WTC11 (cell line): ENCODE measurements at regions of chr1 and their contacts with region 1.

Region 1: GRCh38 chr1:53485478-53486394 is 26.5 kb downstream of the DMRTB1 start:
- DNase-seq: peak; percentile 93
- ATAC-seq: peak; percentile 87
- H3K4me3 Mint-ChIP-seq: no peak overlapping the region
- H3K27ac Mint-ChIP-seq: no peak overlapping the region
- H3K4me1 Mint-ChIP-seq: peaks cover 13% of the 10 kb centered on the region
- H3K27me3 Mint-ChIP-seq: no peaks in the 10 kb centered on the region; the same call in 1 of the 2 replicates
- CTCF ChIP-seq: peak; percentile 74

Region 2: DNA sequence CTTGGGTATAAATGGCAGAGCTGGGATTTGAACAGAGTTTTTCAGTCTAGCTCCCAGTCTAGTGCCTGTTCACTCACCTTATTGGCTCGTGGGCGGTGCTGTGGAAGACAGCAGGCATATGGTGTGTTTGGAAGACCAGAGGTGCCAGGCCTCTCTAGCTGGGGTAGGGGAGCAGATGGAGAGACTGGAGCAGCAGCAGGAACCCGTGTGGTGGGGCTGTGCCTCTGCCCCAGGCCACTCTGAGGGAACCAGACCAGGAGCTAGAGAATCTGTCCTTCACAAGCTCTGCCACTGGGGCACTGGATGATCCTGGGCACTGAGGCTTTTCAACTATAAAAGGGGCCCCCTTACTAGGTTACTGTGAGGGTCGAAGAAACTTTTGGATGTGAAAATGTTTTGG is 20.7 kb before region 1 on chr1:
- CTCF ChIA-PET with region 1: interaction called, 14 read pairs
- POLR2A ChIA-PET with region 1: no interaction called
- DNase-seq: no peak
- ATAC-seq: no peak
- H3K4me3 Mint-ChIP-seq: no peak overlapping the region
- H3K27ac Mint-ChIP-seq: no peak overlapping the region
- H3K4me1 Mint-ChIP-seq: peaks cover 14% of the 10 kb centered on the region
- H3K27me3 Mint-ChIP-seq: peaks cover 20% of the 10 kb centered on the region
- CTCF ChIP-seq: no peak

Region 3: GRCh38 chr1:53519412-53519811 is 33.7 kb after region 1 on chr1:
- CTCF ChIA-PET with region 1: interaction called, 20 read pairs
- POLR2A ChIA-PET with region 1: no interaction called
- DNase-seq: no peak
- ATAC-seq: no peak
- H3K4me3 Mint-ChIP-seq: no peak overlapping the region
- H3K27ac Mint-ChIP-seq: no peak overlapping the region
- H3K4me1 Mint-ChIP-seq: no peaks in the 10 kb centered on the region
- H3K27me3 Mint-ChIP-seq: no peaks in the 10 kb centered on the region
- CTCF ChIP-seq: no peak

Region 4: DNA sequence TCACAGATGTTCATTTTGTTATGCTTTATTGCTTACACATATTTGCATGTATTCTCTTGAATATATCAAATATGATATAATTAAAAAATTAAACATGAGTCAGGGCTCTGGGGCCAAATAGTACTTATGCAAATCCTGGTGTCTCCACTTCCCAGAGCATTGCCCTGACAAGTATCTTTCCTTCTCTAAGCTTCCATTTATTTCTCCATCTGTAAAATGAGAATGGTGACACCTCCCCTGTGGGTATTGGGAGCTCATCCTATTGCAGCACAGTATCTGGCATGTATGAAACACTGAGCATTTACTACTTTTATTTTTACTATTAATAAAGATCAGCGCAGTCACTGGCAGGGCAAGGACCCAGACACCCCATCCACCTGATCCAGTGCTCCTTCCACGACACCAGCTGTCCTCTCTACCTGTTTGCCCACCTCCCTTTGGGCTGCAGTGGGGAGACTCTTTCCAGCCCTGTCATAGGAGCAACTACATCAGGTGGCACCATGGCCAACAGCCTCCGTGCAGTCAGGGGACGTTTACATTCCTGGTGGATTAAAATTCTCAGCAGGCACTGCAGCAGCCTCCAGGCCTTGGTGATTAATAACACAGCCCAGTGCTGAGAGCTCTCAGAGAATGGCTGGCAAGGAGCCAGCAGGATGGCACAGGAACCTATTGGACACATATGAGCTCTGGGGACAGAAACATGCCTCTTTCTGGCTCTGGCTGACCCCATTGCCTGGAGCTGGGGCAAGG is 86.5 kb after region 1 on chr1:
- CTCF ChIA-PET with region 1: interaction called, 49 read pairs
- POLR2A ChIA-PET with region 1: no interaction called
- DNase-seq: peak; percentile 12
- ATAC-seq: peak; percentile 48
- H3K4me3 Mint-ChIP-seq: no peak overlapping the region
- H3K27ac Mint-ChIP-seq: no peak overlapping the region
- H3K4me1 Mint-ChIP-seq: peaks cover 18% of the 10 kb centered on the region
- H3K27me3 Mint-ChIP-seq: peaks cover under 1% of the 10 kb centered on the region
- CTCF ChIP-seq: no peak

Region 5: DNA sequence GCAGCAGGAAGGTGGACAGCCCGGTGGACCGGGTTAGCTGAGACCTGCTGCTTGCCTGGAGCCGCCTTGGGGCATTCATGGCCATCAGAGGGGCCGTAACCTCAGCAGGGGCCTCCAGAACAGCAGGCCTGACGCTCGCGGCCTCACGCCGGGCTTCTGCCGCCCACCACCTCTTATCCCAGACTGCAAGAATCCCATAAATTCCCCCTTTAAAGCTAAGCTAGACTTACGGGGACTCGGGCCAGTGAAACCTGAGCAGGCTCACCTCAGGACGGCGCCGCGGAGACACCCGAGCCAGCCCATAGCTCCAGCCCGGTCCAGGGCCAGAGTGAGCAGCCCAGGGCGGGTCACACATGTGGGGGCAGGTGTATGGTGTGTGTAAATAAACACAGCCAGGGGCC is 120.9 kb after region 1 on chr1:
- CTCF ChIA-PET with region 1: interaction called, 20 read pairs
- POLR2A ChIA-PET with region 1: no interaction called
- DNase-seq: peak; percentile 45
- ATAC-seq: peak; percentile 96
- H3K4me3 Mint-ChIP-seq: no peak overlapping the region
- H3K27ac Mint-ChIP-seq: no peak overlapping the region
- H3K4me1 Mint-ChIP-seq: peaks cover 6% of the 10 kb centered on the region; the same call in 1 of the 2 replicates
- H3K27me3 Mint-ChIP-seq: peaks cover 5% of the 10 kb centered on the region; the same call in 1 of the 2 replicates
- CTCF ChIP-seq: no peak

Region 6: GRCh38 chr1:53738205-53739108 is 252.7 kb after region 1 on chr1:
- CTCF ChIA-PET with region 1: interaction called, 15 read pairs
- POLR2A ChIA-PET with region 1: no interaction called
- DNase-seq: peak; percentile 22
- ATAC-seq: no peak
- H3K4me3 Mint-ChIP-seq: peak overlapping the region; percentile 56
- H3K27ac Mint-ChIP-seq: no peak overlapping the region
- H3K4me1 Mint-ChIP-seq: peaks cover 7% of the 10 kb centered on the region
- H3K27me3 Mint-ChIP-seq: peaks cover 91% of the 10 kb centered on the region
- CTCF ChIP-seq: no peak

Region 7: GRCh38 chr1:53909946-53910345 is 424.2 kb after region 1 on chr1:
- CTCF ChIA-PET with region 1: no interaction called
- POLR2A ChIA-PET with region 1: no interaction called
- DNase-seq: no peak
- ATAC-seq: no peak
- H3K4me3 Mint-ChIP-seq: no peak overlapping the region
- H3K27ac Mint-ChIP-seq: no peak overlapping the region
- H3K4me1 Mint-ChIP-seq: peaks cover 25% of the 10 kb centered on the region
- H3K27me3 Mint-ChIP-seq: no peaks in the 10 kb centered on the region
- CTCF ChIP-seq: no peak